ENCODE measurements at regions of chr1 and their contacts with region 1.

Region 1: DNA sequence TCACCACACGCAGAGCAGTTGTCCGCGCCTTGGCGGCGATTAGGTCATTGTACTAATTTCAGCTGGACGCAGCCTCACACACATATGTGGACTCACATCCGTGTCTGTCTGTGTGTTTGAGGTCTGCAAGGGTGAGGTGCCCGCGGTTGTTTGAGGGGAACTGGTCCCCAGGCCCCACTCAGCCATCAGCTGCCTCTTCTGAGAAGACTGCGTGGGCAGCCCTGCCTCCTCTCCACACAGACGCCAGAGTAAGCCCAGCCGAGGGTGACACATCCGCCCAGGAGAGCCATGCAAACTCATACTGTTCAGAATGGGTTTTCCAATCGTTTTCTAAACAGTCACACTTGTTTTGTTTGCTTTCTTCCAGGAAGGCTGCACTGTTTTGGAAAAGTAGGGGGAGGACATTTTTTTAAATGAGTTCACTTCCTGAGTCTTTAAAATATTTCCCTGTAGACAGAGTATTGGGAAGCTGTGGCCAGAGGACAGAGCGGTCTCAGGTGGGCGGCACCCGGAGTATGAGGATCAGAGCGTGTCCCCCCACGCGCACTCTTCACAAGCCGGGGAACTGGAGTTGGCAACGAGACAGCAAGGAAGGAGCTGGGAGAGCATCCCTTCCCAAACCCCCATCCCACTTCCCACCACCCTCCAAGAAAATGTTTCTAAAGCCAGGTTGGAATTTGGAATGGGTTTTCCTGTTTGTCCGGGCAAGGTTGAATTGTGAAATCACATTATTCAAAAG is 53.3 kb downstream of the TOMM20 start:
- DNase-seq: no peak
- H3K4me3 Mint-ChIP-seq: peak overlapping the region; percentile 56
- H3K27ac Mint-ChIP-seq: peak overlapping the region; percentile 99
- H3K4me1 Mint-ChIP-seq: peaks cover 34% of the 10 kb centered on the region
- H3K27me3 Mint-ChIP-seq: no peaks in the 10 kb centered on the region

Region 2: DNA sequence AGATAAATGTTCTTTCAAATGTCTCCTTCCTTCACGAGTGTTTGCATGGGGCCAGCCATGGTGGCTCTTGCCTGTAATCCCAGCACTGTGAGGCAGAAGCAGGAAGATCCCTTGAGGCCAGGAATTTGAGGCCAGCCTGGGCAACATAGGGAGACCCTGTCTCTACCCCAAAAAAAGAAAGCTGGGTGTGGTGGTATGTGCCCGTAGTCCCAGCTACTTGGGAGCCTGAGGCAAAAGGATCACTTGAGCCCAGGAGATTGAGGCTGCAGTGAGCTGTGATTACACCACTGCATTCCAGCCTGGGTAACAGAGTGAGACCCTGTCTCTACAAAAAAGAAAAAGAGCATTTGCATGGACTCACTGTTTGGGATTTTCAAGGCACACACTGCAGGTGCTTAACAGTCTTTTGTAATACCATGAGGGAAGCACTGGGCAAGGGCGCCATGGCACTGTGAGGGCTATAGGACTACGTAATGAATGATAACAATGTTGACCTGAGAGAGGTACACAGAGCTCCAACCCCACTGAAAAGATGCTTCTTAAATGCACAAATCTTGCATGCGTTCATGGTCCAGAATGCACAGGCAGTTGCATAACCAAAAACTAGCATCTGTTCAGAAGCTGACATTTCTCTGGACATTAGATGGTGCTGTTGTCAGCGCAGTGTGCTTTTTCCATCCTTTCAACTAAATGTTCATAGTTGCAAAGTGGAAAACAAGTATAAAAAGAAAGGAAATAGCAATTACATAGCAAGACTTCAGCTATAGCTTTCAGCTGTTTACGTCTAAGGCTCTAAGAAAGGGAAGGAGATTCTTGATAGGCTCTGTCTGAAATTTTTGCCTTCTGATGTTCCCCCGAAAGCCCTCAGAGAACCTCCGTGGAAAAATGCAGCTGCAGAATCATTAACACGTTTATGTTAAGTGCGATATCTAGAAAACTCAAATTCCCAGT is 588.6 kb before region 1 on chr1:
- intact Hi-C with region 1: loop called (anchors 1 kb)
- DNase-seq: no peak
- H3K4me3 Mint-ChIP-seq: peak overlapping the region; percentile 28
- H3K27ac Mint-ChIP-seq: peak overlapping the region; percentile 94
- H3K4me1 Mint-ChIP-seq: peaks cover 42% of the 10 kb centered on the region
- H3K27me3 Mint-ChIP-seq: peaks cover 16% of the 10 kb centered on the region

Region 3: DNA sequence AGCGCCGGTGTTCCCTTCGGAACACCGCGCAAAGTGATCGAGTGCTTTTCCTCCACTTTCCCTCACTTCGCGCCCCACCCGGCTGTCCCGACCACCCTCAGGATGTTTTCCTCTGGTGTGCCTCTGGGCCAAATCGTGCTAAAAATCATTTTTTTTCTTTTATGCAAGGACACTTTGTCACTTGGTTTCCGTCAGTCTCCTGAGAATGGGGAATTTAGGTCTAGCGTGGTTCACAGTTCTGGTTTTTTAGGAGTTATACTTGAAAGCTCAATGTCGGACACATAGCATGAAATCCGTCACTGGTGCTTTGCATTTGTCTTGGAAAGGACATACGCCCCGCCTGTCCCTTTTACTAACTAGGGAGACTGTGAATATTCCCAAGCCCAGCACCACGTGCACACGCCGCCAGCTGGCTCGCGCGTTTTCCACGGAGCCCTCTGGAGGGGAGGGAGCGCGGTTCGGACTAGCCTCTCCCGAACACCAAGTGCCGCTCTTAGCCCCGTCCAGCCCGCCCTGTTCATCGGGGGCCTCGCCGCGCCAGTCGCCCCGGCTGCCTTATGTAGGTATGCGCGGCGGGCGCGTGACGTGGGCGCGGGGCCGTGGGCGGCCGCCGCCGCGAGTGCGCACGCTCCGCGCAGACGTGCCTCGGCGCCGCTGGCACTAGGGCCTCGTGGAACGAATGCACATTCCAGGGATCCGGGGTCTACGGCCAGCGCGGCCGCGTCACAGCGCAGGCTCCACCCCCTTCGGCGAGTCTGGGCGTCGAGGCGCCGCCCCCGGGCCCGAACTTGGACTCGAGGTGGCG is 464.8 kb before region 1 on chr1:
- intact Hi-C with region 1: loop called (anchors 1 kb)
- DNase-seq: peak; percentile 86
- H3K4me3 Mint-ChIP-seq: peak overlapping the region; percentile 88
- H3K27ac Mint-ChIP-seq: peak overlapping the region; percentile 98
- H3K4me1 Mint-ChIP-seq: peaks cover 39% of the 10 kb centered on the region
- H3K27me3 Mint-ChIP-seq: peaks cover 2% of the 10 kb centered on the region

Region 4: GRCh38 chr1:234772345-234773147 is 302.8 kb before region 1 on chr1:
- intact Hi-C with region 1: loop called (anchors 2 kb)
- DNase-seq: peak; percentile 86
- H3K4me3 Mint-ChIP-seq: peak overlapping the region; percentile 71
- H3K27ac Mint-ChIP-seq: peak overlapping the region; percentile 97
- H3K4me1 Mint-ChIP-seq: peaks cover 58% of the 10 kb centered on the region
- H3K27me3 Mint-ChIP-seq: no peaks in the 10 kb centered on the region

Region 5: GRCh38 chr1:234862944-234863515 is 212.3 kb before region 1 on chr1:
- intact Hi-C with region 1: loop called (anchors 2 kb)
- DNase-seq: no peak
- H3K4me3 Mint-ChIP-seq: no peak overlapping the region
- H3K27ac Mint-ChIP-seq: no peak overlapping the region
- H3K4me1 Mint-ChIP-seq: peaks cover 30% of the 10 kb centered on the region
- H3K27me3 Mint-ChIP-seq: no peaks in the 10 kb centered on the region

Region 6: DNA sequence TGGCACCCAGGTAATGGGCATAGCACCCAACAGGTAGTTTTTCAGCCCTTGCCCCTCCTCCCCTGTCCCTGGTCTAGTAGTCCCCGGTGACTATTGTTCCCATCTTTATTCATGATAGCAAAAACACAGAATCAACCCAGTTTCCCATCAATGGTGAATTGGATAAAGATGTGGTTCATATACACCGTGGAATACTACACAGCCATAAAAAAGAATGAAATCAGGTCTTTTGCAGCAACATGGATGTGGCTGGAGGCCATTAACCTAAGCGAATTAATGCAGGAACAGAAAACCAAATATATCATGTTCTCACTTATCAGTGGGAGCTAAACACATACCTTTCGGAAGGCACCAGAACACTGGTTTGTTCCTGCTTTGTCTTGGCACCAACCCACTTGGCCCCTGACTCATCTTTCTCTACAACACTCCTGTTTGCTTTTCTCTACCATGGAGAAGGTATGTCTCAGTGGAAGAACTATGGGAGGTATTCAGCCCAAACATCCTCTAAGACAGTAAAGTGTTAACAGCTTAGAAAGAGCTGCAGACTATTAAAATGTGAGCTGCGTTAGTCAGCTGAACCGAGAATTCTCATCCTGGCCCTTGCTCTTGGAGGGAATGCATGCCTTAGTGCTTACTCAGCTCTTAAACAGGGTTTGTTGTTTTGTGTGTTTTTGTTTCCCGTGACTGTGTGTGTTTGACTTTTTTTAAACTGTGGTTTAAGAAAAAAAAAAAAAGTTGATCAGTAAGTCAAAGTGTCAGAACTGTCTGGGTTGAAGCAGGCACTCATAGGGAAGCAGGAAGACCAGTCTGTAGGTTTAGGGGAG is 149.7 kb before region 1 on chr1:
- intact Hi-C with region 1: loop called (anchors 2 kb)
- DNase-seq: no peak
- H3K4me3 Mint-ChIP-seq: peak overlapping the region; percentile 72
- H3K27ac Mint-ChIP-seq: peak overlapping the region; percentile 98
- H3K4me1 Mint-ChIP-seq: peaks cover 58% of the 10 kb centered on the region
- H3K27me3 Mint-ChIP-seq: no peaks in the 10 kb centered on the region

Region 7: DNA sequence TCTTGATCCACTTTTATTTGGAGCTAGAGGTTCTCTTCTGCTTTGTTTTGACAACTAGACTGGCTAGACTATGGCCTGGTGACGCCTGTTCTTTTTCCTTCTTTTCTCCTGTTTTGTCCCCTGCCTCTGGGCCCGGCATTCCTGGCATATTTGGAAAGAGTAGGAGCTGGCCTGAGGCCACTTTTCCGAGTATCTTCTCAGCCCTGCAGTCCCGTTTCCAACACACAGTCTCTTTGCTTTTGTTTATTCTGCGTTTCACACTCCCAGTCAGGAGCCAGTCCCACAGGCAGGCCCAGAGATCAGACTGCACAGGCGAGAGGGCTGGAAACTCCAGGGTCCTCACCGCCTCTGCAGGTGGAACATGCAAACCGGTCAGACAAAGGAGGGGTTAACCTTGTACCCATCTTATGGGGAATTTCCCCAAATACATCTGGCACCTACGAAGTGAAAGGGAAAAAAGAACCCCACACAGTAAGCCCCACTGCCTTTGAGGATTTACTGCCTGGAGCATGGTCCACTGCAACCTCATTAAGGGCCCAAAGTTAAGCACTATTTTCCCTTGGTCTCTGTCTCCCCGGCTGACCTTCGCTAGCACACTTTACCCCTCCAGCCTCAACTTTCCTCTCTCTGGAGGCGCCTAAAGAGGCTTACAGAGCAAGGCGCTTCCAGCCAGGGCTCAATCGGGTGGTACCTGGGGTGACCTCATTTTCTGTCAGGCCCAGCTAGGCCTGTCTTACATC is 87.8 kb before region 1 on chr1:
- intact Hi-C with region 1: loop called (anchors 1 kb)
- DNase-seq: no peak
- H3K4me3 Mint-ChIP-seq: peak overlapping the region; percentile 51
- H3K27ac Mint-ChIP-seq: peak overlapping the region; percentile 97
- H3K4me1 Mint-ChIP-seq: peaks cover 72% of the 10 kb centered on the region
- H3K27me3 Mint-ChIP-seq: no peaks in the 10 kb centered on the region

Measured in activated T-helper 2 cell treated with anti-CD3 and anti-CD28 coated beads, Interferon-gamma antibody, Interleukin-2, Interleukin-4, amounts not matched to agents 10 μg/mL and 5 μg/mL and 100 μg/mL, durations not matched to agents 14 hours and 24 hours and 36 hours (primary cell).